Activated naive CD4-positive, alpha-beta T cell treated with anti-CD3 and anti-CD28 coated beads for 36 hours (primary cell): ENCODE measurements at regions of chr2 and their contacts with region 1.

Region 1: GRCh38 chr2:234135720-234136221 is 85.3 kb downstream of the SPP2 start:
- DNase-seq: peak; percentile 67
- H3K4me3 Mint-ChIP-seq: no peak overlapping the region
- H3K27ac Mint-ChIP-seq: no peak overlapping the region
- H3K4me1 Mint-ChIP-seq: peaks cover 27% of the 10 kb centered on the region
- H3K27me3 Mint-ChIP-seq: no peaks in the 10 kb centered on the region

Region 2: GRCh38 chr2:233976690-233977294 is 159.0 kb before region 1 on chr2:
- CTCF ChIA-PET with region 1: no interaction called
- intact Hi-C with region 1: loop called (anchors 2 kb)
- DNase-seq: peak; percentile 20
- H3K4me3 Mint-ChIP-seq: no peak overlapping the region
- H3K27ac Mint-ChIP-seq: no peak overlapping the region
- H3K4me1 Mint-ChIP-seq: peaks cover 12% of the 10 kb centered on the region
- H3K27me3 Mint-ChIP-seq: no peaks in the 10 kb centered on the region

Region 3: DNA sequence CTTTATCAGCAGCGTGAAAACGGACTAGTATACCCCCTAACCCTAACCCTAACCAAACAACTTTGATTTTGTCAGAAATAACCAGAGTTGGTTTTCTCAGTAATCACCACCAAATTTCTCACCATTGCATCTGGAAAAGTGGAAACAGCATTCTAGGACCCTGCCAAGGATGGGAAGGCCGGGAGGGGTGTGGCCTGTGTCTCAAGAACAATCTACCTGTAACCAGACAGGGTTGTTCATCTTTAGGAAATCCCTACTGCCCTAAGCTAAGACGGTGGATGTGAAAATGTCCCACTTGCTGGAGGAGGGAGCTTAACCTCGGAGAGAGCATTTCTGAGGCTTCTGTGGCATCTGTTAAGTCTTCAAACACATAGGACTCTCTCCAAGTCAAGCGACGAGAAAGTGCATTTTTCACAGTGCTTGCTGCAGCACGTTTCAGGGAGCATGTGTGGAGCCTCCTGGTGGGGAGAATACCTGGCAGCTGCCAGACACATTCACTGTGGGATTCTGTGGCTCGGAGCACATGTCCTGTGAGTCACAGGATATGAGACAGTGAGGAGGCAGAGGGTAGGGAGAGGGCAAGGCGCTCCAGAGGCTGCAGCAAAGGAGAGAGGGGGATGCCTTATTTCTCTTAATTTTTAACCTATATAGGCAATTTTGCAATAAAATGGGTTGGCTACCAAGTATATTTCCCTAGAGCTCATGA is 122.2 kb after region 1 on chr2:
- CTCF ChIA-PET with region 1: interaction called, 3 read pairs
- intact Hi-C with region 1: loop called (anchors 2 kb)
- DNase-seq: peak; percentile 60
- H3K4me3 Mint-ChIP-seq: no peak overlapping the region
- H3K27ac Mint-ChIP-seq: no peak overlapping the region
- H3K4me1 Mint-ChIP-seq: peaks cover 11% of the 10 kb centered on the region
- H3K27me3 Mint-ChIP-seq: no peaks in the 10 kb centered on the region

Region 4: DNA sequence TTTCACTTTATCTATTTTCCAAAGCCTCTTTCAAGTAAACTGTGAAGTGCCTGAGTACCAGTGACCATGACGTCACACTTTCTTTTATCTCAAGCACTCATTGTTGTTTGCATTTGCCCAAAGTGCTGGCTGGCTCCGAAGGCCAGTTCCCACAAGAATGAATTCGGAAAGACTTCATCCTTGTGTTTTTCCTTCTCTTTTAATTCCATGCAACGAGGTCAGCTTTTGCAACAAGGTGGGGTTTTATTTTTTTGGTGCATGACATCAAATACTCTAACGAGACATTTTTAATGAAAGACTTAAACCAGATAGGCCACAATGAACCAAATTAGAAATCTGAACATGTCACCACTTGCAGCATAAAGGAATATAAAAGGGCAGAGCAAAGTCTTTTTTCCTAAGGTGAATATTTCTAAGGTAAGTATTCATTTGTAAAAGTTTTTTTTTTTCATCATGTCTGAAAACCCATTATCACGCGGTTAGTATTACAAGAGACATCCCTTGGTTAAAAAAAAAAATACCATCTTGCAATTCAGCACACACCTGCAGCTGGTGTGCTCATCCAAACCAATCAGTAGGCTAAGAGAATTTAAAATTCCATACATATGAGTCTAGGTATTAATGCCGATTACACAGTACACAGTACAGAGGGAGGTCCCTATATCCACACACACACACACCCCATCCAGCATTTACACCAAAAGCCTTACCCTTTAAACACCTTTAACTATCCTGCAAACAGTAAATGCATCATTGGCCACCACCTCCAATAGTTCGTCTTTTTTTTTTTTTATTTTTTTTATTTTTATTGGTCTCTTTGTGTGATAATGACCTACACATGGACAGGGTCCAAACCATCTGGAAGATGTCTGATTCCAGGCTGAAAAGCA is 358.8 kb after region 1 on chr2:
- CTCF ChIA-PET with region 1: interaction called, 34 read pairs
- intact Hi-C with region 1: loop called (anchors 1 kb)
- DNase-seq: no peak
- H3K4me3 Mint-ChIP-seq: peak overlapping the region; percentile 90
- H3K27ac Mint-ChIP-seq: peak overlapping the region; percentile 89
- H3K4me1 Mint-ChIP-seq: peaks cover 48% of the 10 kb centered on the region
- H3K27me3 Mint-ChIP-seq: no peaks in the 10 kb centered on the region

Region 5: GRCh38 chr2:234500394-234501006 is 364.7 kb after region 1 on chr2:
- CTCF ChIA-PET with region 1: interaction called, 67 read pairs
- intact Hi-C with region 1: loop called (anchors 1 kb)
- DNase-seq: peak; percentile 83
- H3K4me3 Mint-ChIP-seq: no peak overlapping the region
- H3K27ac Mint-ChIP-seq: no peak overlapping the region
- H3K4me1 Mint-ChIP-seq: peaks cover 26% of the 10 kb centered on the region
- H3K27me3 Mint-ChIP-seq: no peaks in the 10 kb centered on the region

Region 6: GRCh38 chr2:234544659-234545611 is 409.2 kb after region 1 on chr2:
- CTCF ChIA-PET with region 1: interaction called, 12 read pairs
- intact Hi-C with region 1: loop called (anchors 1 kb)
- DNase-seq: peak; percentile 85
- H3K4me3 Mint-ChIP-seq: no peak overlapping the region
- H3K27ac Mint-ChIP-seq: no peak overlapping the region
- H3K4me1 Mint-ChIP-seq: no peaks in the 10 kb centered on the region
- H3K27me3 Mint-ChIP-seq: peaks cover 4% of the 10 kb centered on the region